Breast epithelium (tissue), 4 donors: ENCODE measurements at regions of chr7 and their contacts with region 1.

Region 1: DNA sequence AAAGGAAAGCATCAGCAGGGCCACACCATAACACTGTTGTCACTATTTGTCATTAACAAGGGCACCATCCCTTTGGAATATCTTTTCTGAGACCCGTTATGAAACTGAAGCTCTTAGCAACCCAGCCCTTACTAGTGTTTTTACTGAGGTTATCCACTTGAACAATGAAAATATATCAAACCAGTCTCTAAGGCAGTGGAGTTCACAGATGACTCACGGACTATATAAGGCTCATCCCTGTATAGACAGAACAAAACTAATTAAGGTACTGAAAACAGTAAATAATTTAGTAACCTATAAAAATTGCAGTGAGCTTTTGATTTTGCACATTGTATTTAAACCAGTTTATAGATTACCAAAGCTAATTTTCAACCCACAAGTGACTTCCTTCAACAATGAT is 196.0 kb downstream of the ELAPOR2 start:
- DNase-seq: no peak
- H3K4me3 ChIP-seq: no peak overlapping the region
- H3K27ac ChIP-seq: no peak overlapping the region
- H3K4me1 ChIP-seq: no peaks in the 10 kb centered on the region
- H3K27me3 ChIP-seq: no peaks in the 10 kb centered on the region
- CTCF ChIP-seq: no peak
- POLR2A ChIP-seq: no peak

Region 2: DNA sequence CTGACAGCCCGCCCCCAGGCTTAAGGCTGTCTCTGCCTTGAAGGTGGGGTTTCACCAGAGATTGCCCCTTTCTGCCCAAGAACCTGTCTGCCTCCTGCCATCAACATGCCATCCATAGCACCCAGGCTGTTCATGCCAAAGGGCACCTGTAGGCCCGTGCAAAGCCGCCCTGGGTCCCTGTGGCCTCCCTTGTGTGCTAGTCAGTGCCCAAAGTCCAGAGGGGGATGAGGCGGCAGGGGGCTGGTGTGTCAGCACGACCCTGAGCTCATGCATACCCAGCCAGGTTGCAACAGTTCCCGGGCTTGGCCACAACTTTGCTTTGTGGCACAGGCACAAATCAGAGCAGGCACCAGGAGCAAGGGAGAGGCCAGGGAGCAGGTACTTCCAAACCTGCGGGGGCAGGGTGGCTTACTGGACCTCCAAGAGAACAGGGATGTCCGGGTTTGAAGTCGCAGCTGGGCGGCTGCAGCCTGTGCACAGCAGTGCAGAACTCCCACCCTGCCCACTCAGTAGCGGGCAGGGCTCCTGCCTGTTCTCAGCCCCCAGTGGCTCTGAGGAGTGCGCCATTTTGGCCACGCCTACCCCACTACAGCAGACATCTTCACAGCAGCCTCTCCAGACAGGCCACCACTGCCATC is 890.8 kb before region 1 on chr7:
- intact Hi-C with region 1: loop called (anchors 10 kb)
- DNase-seq: no peak
- H3K4me3 ChIP-seq: no peak overlapping the region
- H3K27ac ChIP-seq: no peak overlapping the region
- H3K4me1 ChIP-seq: no peaks in the 10 kb centered on the region
- H3K27me3 ChIP-seq: no peaks in the 10 kb centered on the region
- CTCF ChIP-seq: no peak
- POLR2A ChIP-seq: no peak